ENCODE measurements at regions of chr12 and their contacts with region 1.

Region 1: DNA sequence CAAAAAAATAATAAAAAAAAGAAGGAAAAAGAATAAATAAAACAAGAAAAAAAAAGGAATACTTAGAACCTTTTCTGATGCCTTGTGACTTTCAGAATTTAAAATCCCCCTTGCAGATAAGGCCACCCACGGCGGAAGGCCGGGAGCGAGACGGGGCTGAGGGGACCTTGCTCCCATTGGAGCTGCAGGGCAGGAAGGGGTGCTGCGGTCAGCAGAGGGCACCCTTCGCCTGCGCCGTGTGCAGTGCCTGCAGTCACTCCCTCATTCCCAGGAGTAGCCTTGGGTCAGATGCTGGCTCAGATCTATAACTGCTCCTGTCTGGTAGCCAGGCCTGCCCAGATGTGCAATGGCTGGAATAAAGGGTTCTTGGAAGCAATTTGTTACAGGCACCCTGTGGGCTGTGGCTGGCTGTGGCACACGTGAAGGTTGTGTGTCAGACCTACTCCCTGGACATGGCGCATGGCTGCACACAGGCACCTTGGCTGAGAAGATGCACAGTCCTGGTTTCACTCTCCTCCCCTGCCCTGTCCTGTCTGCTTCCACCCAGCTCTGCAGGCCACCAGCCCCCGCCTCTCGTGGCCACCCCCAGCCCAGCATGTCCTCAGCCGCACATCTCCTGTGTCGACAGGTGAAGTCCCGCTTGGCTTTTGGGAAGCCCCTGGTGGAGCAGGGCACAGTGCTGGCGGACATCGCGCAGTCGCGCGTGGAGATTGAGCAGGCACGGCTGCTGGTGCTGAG is 13.4 kb upstream of the ALDH2 start:
- DNase-seq: peak; percentile 51
- H3K4me3 ChIP-seq: no peak overlapping the region
- H3K27ac ChIP-seq: no peak overlapping the region
- H3K4me1 ChIP-seq: peaks cover 12% of the 10 kb centered on the region
- CTCF ChIP-seq: peak; percentile 90

Region 2: GRCh38 chr12:111788178-111788654 is 34.9 kb after region 1 on chr12:
- CTCF ChIA-PET with region 1: no interaction called
- POLR2A ChIA-PET with region 1: no interaction called
- intact Hi-C with region 1: loop called (anchors 1 kb)
- DNase-seq: peak; percentile 66
- H3K4me3 ChIP-seq: no peak overlapping the region
- H3K27ac ChIP-seq: no peak overlapping the region
- H3K4me1 ChIP-seq: no peaks in the 10 kb centered on the region
- CTCF ChIP-seq: peak; percentile 74

Region 3: DNA sequence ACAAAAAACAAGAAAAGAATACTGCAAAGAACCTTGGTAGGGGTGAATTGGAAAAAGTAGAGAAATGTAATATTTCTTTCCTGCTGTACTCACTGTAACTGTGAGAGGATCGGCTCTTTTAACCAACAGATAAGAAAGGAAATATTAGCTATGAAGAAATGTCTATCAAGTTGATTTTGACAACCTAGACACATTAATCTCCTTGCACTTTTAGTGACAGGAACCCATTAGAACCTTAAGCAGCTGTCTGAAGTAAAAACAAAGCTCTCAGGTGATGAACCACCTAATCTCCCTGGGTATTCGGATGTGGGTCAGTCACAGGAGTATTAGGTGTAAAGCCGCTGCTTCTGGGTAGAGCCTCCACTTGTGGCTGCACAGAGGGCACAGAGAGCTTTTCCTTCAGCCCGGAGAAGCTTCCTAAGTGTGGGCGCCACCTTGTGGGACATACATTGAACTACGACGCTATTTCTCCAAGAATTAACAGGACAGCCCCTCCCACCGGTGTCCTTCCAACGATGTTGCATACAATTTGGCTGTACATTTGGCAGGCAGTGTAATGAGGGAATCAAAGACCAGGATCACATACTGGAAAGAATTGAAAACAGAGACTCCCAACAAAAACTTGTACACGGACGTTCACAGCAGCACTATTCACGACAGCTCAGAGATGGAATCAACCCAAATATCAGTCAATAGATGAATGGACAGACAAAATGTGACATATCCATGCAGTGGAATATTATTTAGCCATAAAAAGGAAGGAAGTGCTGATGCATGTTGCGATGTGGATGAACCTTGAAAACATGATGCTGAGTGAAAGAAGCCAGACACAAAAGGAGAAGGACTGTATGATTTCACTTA is 59.8 kb after region 1 on chr12:
- CTCF ChIA-PET with region 1: interaction called, 7 read pairs
- POLR2A ChIA-PET with region 1: no interaction called
- intact Hi-C with region 1: loop called (anchors 1 kb)
- DNase-seq: peak; percentile 90
- H3K4me3 ChIP-seq: no peak overlapping the region
- H3K27ac ChIP-seq: no peak overlapping the region
- H3K4me1 ChIP-seq: no peaks in the 10 kb centered on the region
- CTCF ChIP-seq: peak; percentile 93

Region 4: DNA sequence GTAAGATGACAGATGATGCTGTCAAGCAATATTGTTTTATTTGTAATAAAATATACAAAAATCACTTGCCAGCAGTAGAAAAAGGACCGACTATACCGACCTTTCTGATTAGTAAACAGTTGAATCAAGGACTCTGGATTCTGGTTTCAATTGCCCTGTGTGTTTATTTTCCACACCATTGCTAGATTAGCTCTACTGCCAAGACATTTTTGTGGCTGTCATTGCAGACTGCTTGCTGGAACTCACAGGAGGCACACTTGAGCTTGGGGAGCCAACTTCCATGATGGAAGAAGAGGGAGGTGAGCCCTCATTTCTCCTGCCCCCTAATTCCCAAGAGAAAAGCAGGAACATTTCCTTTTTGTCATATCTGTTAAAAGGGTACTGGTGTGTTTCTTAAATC is 140.0 kb after region 1 on chr12:
- CTCF ChIA-PET with region 1: no interaction called
- POLR2A ChIA-PET with region 1: no interaction called
- intact Hi-C with region 1: no loop called
- DNase-seq: no peak
- H3K4me3 ChIP-seq: no peak overlapping the region
- H3K27ac ChIP-seq: no peak overlapping the region
- H3K4me1 ChIP-seq: no peaks in the 10 kb centered on the region
- CTCF ChIP-seq: no peak

Measured in OCI-LY7 (cell line).